H1 (cell line): ENCODE measurements at regions of chr17 and their contacts with region 1.

Region 1: GRCh38 chr17:33562792-33563191 is 269.7 kb upstream of the ASIC2 start:
- DNase-seq: no peak
- H3K4me3 ChIP-seq: no peak overlapping the region
- H3K27ac ChIP-seq: no peak overlapping the region
- H3K4me1 ChIP-seq: no peaks in the 10 kb centered on the region
- H3K27me3 ChIP-seq: no peaks in the 10 kb centered on the region
- CTCF ChIP-seq: peak; percentile 24 to 58 (median 53); a peak in 3 of 4 replicates
- EP300 ChIP-seq: no peak
- POLR2A ChIP-seq: no peak
- RAD21 ChIP-seq: peak; percentile 44 to 68

Region 2: GRCh38 chr17:33486135-33486885 is 76.5 kb before region 1 on chr17:
- CTCF ChIA-PET with region 1: no interaction called
- POLR2A ChIA-PET with region 1: no interaction called
- DNase-seq: no peak
- H3K4me3 ChIP-seq: no peak overlapping the region
- H3K27ac ChIP-seq: no peak overlapping the region
- H3K4me1 ChIP-seq: no peaks in the 10 kb centered on the region
- H3K27me3 ChIP-seq: no peaks in the 10 kb centered on the region
- CTCF ChIP-seq: no peak
- EP300 ChIP-seq: no peak
- POLR2A ChIP-seq: no peak
- RAD21 ChIP-seq: no peak

Region 3: GRCh38 chr17:33498069-33498468 is 64.7 kb before region 1 on chr17:
- CTCF ChIA-PET with region 1: no interaction called
- POLR2A ChIA-PET with region 1: no interaction called
- DNase-seq: no peak
- H3K4me3 ChIP-seq: no peak overlapping the region
- H3K27ac ChIP-seq: no peak overlapping the region
- H3K4me1 ChIP-seq: 0 out of 7 replicates have a peak, but pooled peaks cover 0 to 3% (median 0%) of the 10 kb centered on the region in 4 experiments
- H3K27me3 ChIP-seq: no peaks in the 10 kb centered on the region
- CTCF ChIP-seq: no peak
- EP300 ChIP-seq: no peak
- POLR2A ChIP-seq: no peak
- RAD21 ChIP-seq: no peak

Region 4: GRCh38 chr17:33551911-33552310 is 10.9 kb before region 1 on chr17:
- CTCF ChIA-PET with region 1: interaction called, 10 read pairs
- POLR2A ChIA-PET with region 1: no interaction called
- DNase-seq: no peak
- H3K4me3 ChIP-seq: no peak overlapping the region
- H3K27ac ChIP-seq: no peak overlapping the region
- H3K4me1 ChIP-seq: no peaks in the 10 kb centered on the region
- H3K27me3 ChIP-seq: no peaks in the 10 kb centered on the region
- CTCF ChIP-seq: no peak
- EP300 ChIP-seq: no peak
- POLR2A ChIP-seq: no peak
- RAD21 ChIP-seq: no peak